ENCODE measurements at regions of chr6 and their contacts with region 1.

Region 1: GRCh38 chr6:15621203-15622044 is 41.4 kb downstream of the DTNBP1 start:
- DNase-seq: peak; percentile 45
- ATAC-seq: peak; percentile 93
- H3K4me3 Mint-ChIP-seq: no peak overlapping the region
- H3K27ac Mint-ChIP-seq: peak overlapping the region; percentile 6
- H3K4me1 Mint-ChIP-seq: peaks cover 32% of the 10 kb centered on the region
- H3K27me3 Mint-ChIP-seq: peaks cover 2% of the 10 kb centered on the region

Region 2: GRCh38 chr6:14187406-14187805 is 1434.0 kb before region 1 on chr6:
- CTCF ChIA-PET with region 1: no interaction called
- POLR2A ChIA-PET with region 1: no interaction called
- intact Hi-C with region 1: loop called in 1 of 2 experiments (anchors 10 kb)
- DNase-seq: no peak
- ATAC-seq: no peak
- H3K4me3 Mint-ChIP-seq: no peak overlapping the region
- H3K27ac Mint-ChIP-seq: no peak overlapping the region
- H3K4me1 Mint-ChIP-seq: no peaks in the 10 kb centered on the region
- H3K27me3 Mint-ChIP-seq: no peaks in the 10 kb centered on the region

Region 3: DNA sequence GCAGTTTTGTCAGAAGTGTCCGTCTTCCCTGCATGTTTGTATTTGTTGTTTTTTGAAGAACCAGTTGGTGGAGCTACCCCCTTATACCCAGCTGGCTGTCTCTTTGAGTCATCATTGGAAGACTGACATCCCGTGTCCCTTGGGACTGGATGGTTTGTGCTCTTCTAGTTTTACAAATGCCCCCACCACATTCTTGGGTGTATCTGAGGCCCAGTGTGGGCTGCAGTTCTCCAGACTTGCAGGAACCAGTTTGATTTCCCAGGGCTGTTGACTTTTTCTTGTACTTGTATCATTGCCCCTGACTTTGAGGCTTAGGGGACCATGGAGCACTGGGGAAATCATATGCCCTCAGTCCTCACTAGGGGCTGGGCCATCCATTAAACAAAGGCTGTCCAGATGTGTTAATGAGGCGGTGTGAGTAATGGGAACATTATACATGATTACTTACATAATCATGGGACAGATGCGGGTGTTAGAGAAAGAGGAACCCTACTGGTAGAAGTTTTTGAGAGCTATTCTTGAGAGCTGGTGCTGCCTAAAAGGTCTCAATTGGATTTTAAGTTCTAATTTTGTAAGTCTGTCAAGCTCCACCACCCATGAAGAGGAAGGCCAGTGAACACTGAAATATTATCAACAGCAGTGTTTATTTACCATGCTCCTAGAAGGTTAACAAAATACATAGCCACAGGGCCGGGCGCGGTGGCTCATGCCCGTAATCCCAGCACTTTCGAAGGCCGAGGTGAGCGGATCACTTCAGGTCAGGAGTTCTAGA is 367.2 kb before region 1 on chr6:
- CTCF ChIA-PET with region 1: no interaction called
- POLR2A ChIA-PET with region 1: no interaction called
- intact Hi-C with region 1: loop called (anchors 5 kb)
- DNase-seq: no peak
- ATAC-seq: no peak
- H3K4me3 Mint-ChIP-seq: peak overlapping the region; percentile 91
- H3K27ac Mint-ChIP-seq: peak overlapping the region; percentile 100
- H3K4me1 Mint-ChIP-seq: peaks cover 98% of the 10 kb centered on the region
- H3K27me3 Mint-ChIP-seq: no peaks in the 10 kb centered on the region

Region 4: GRCh38 chr6:15522427-15522826 is 99.0 kb before region 1 on chr6:
- CTCF ChIA-PET with region 1: interaction called, 3 read pairs
- POLR2A ChIA-PET with region 1: no interaction called
- intact Hi-C with region 1: loop called (anchors 5 kb)
- DNase-seq: peak; percentile 16
- ATAC-seq: peak; percentile 17
- H3K4me3 Mint-ChIP-seq: no peak overlapping the region
- H3K27ac Mint-ChIP-seq: peak overlapping the region; percentile 57
- H3K4me1 Mint-ChIP-seq: peaks cover 24% of the 10 kb centered on the region
- H3K27me3 Mint-ChIP-seq: no peaks in the 10 kb centered on the region

Region 5: GRCh38 chr6:15631432-15631831 is 10.0 kb after region 1 on chr6:
- CTCF ChIA-PET with region 1: no interaction called
- POLR2A ChIA-PET with region 1: no interaction called
- intact Hi-C with region 1: no loop called
- DNase-seq: no peak
- ATAC-seq: no peak
- H3K4me3 Mint-ChIP-seq: no peak overlapping the region
- H3K27ac Mint-ChIP-seq: no peak overlapping the region
- H3K4me1 Mint-ChIP-seq: peaks cover 36% of the 10 kb centered on the region
- H3K27me3 Mint-ChIP-seq: peaks cover 6% of the 10 kb centered on the region